ENCODE measurements at regions of chr1 and their contacts with region 1.

Region 1: GRCh38 chr1:69700770-69701169 is 133.0 kb downstream of the LRRC7 start:
- DNase-seq: no peak
- ATAC-seq: peak; percentile 70
- H3K4me3 ChIP-seq: no peak overlapping the region
- H3K27ac ChIP-seq: no peak overlapping the region
- H3K4me1 ChIP-seq: no peaks in the 10 kb centered on the region
- H3K27me3 ChIP-seq: no peaks in the 10 kb centered on the region
- CTCF ChIP-seq: peak; percentile 30 to 42 (median 34); a peak in 3 of 6 replicates
- EP300 ChIP-seq: no peak
- POLR2A ChIP-seq: no peak
- RAD21 ChIP-seq: peak; percentile 42

Region 2: DNA sequence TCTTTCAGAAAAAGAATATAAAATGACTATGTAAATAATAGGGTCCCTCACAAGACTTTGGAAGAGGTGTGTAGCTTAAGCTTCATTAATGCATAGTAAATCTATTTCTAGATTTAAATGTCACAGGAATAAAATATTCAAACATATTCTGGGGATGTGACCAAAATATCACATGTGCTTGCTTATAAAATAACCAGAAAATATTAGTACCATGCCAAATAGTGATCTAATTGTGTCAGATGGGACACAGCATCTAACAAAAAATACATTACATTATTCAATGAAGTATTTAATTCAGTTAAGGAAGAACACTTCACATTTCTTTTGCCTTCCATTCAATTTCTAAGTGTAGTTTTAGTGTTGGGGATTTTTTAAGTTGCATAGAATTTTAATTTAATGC is 325.1 kb after region 1 on chr1:
- CTCF ChIA-PET with region 1: no interaction called
- POLR2A ChIA-PET with region 1: interaction called, 13 read pairs
- RAD21 ChIA-PET with region 1: no interaction called
- SMC1A ChIA-PET with region 1: no interaction called
- in situ Hi-C with region 1: no loop called
- intact Hi-C with region 1: no loop called
- DNase-seq: no peak
- ATAC-seq: no peak
- H3K4me3 ChIP-seq: no peak overlapping the region
- H3K27ac ChIP-seq: no peak overlapping the region
- H3K4me1 ChIP-seq: no peaks in the 10 kb centered on the region
- H3K27me3 ChIP-seq: no peaks in the 10 kb centered on the region
- CTCF ChIP-seq: no peak
- EP300 ChIP-seq: no peak
- POLR2A ChIP-seq: no peak
- RAD21 ChIP-seq: no peak

Measured in GM12878 (cell line).